Breast epithelium (tissue), 4 donors: ENCODE measurements at regions of chr6 and their contacts with region 1.

Region 1: GRCh38 chr6:43143235-43144124 is 27.6 kb upstream of the SRF start:
- DNase-seq: peak; percentile 83 to 89
- H3K4me3 ChIP-seq: peak overlapping the region in 1 of 3 donors; percentile 3
- H3K27ac ChIP-seq: peak overlapping the region; percentile 21 to 36
- H3K4me1 ChIP-seq: peaks cover 3 to 4% of the 10 kb centered on the region in 2 donors
- H3K27me3 ChIP-seq: no peaks in the 10 kb centered on the region
- CTCF ChIP-seq: peak; percentile 78 to 97 (median 96)
- POLR2A ChIP-seq: no peak

Region 2: DNA sequence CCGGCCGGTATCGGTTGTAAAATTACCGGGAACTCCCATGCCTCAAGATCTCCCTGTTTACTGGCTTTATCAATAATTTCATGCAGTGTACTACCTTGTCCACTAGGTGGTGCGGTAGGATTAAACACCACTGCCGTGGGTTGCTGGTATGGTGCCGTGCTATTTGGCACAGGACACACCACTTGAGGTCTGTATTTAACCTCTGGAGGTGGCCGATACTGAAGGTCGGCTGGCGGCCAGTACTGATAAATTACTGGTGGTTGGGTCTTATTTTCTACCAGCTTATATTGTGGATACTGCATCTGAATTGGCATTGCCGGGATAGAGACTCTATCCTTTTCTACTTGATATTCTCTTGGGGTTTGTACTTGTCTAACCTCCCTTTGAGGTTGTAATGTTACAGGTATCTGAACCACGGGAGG is 241.9 kb before region 1 on chr6:
- intact Hi-C with region 1: loop called (anchors 10 kb)
- DNase-seq: peak; percentile 75 to 77
- H3K4me3 ChIP-seq: peak overlapping the region in 1 of 3 donors; percentile 39
- H3K27ac ChIP-seq: peak overlapping the region; percentile 55 to 64
- H3K4me1 ChIP-seq: no peaks in the 10 kb centered on the region
- H3K27me3 ChIP-seq: no peaks in the 10 kb centered on the region
- CTCF ChIP-seq: peak; percentile 91 to 96 (median 94)
- POLR2A ChIP-seq: no peak